B cell (primary cell): ENCODE measurements at regions of chr11 and their contacts with region 1.

Region 1: DNA sequence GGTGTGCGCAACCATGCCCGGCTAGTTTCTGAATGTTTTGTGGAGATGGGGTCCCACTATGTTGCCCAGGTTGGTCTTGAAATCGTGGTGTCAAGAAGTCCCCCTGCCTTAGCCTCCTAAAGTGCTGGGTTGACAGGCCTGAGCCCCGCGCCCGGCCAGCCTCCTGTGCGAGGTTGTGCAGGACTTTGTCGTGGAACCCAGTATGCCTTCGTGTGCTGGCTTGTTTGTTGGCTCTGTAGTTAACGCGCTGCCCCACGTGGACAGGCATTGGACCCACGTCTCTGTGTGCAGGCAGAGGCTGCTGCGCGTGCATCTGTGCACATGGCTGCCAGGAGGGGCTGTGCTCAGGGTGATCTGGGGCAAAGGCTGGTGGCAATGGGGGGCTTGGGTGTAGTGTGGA is 33.9 kb upstream of the ZNF195 start:
- DNase-seq: no peak
- ATAC-seq: no peak
- H3K4me3 ChIP-seq: no peak overlapping the region
- H3K4me3 Mint-ChIP-seq: no peak overlapping the region
- H3K27ac ChIP-seq: no peak overlapping the region
- H3K27ac Mint-ChIP-seq: no peak overlapping the region
- H3K4me1 ChIP-seq: no peaks in the 10 kb centered on the region
- H3K4me1 Mint-ChIP-seq: peaks cover 5% of the 10 kb centered on the region
- H3K27me3 ChIP-seq: no peaks in the 10 kb centered on the region
- H3K27me3 Mint-ChIP-seq: no peaks in the 10 kb centered on the region
- CTCF ChIP-seq: no peak

Region 2: DNA sequence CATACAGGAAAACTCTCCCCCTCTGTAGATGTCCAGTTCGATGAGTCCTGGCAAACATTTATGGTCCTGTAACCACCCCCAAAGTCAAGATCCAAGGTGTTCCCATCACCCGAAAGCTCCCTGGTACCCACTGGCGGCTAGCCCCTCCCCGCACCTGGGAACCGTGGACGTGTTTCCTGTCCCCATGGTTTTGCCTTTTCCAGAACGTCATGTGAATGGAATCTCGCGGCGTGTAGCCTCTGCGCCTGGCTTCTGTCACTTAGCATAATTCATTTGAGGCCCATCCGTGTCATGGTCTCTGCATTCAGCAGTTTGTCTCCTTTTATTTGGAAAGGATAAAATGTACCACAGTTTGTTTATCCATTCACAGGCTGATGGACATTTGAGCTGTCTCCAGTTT is 861.7 kb before region 1 on chr11:
- CTCF ChIA-PET with region 1: no interaction called
- POLR2A ChIA-PET with region 1: no interaction called
- intact Hi-C with region 1: no loop called
- DNase-seq: no peak
- ATAC-seq: no peak
- H3K4me3 ChIP-seq: no peak overlapping the region
- H3K4me3 Mint-ChIP-seq: no peak overlapping the region
- H3K27ac ChIP-seq: no peak overlapping the region
- H3K27ac Mint-ChIP-seq: no peak overlapping the region
- H3K4me1 ChIP-seq: no peaks in the 10 kb centered on the region
- H3K4me1 Mint-ChIP-seq: peaks cover 13% of the 10 kb centered on the region
- H3K27me3 ChIP-seq: no peaks in the 10 kb centered on the region
- H3K27me3 Mint-ChIP-seq: no peaks in the 10 kb centered on the region
- CTCF ChIP-seq: no peak

Region 3: DNA sequence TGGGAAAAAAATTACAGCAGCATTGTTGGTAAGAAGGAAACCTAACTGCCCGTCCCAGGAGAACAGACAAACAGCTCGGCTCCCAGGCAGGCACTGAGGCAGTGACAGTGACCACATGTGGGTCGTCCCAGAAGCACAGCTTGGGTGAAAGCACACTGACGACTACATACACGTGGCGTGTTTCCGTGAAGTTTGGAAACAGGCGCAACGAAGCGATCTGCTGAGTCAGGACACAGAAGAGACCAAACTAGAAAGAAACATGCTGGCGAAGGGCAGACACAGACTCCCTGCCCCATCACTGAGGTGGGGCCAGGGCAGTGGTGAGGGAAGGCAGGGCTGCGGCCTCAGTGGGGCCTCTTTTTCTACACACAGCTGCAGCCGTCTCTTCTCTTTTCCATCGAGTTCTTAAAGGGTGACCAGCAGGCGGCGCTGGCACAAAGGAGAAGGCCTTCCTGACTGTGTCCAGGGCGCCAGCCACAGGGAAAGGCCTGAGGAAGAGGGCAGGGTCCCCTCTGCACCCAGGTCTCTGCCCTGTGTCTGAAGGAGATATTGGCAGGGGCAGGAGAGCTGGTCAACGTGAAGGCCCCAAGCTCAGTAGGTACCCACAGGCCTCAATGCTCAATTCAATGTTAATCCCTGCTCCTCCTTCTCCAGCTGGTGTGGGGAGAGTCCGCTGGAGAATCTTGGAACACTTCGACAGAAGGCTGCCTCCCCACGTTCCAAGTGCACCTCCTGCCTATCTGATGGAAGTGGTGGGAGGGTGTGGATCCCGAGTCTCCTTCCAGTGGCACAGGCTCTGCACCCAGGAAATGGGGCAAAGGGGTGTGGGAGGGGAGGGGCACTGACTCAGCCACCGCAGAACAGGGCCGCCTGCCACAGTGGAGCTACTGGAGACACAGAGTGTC is 375.5 kb before region 1 on chr11:
- CTCF ChIA-PET with region 1: no interaction called
- POLR2A ChIA-PET with region 1: no interaction called
- intact Hi-C with region 1: loop called (anchors 5 kb)
- DNase-seq: peak; percentile 51
- ATAC-seq: peak; percentile 34
- H3K4me3 ChIP-seq: no peak overlapping the region
- H3K4me3 Mint-ChIP-seq: peak overlapping the region; percentile 9
- H3K27ac ChIP-seq: peak overlapping the region in 1 of 2 donors; percentile 42
- H3K27ac Mint-ChIP-seq: peak overlapping the region; percentile 39
- H3K4me1 ChIP-seq: peaks cover 24 to 30% of the 10 kb centered on the region in 2 donors
- H3K4me1 Mint-ChIP-seq: peaks cover 26% of the 10 kb centered on the region
- H3K27me3 ChIP-seq: no peaks in the 10 kb centered on the region
- H3K27me3 Mint-ChIP-seq: no peaks in the 10 kb centered on the region
- CTCF ChIP-seq: peak; percentile 50

Region 4: DNA sequence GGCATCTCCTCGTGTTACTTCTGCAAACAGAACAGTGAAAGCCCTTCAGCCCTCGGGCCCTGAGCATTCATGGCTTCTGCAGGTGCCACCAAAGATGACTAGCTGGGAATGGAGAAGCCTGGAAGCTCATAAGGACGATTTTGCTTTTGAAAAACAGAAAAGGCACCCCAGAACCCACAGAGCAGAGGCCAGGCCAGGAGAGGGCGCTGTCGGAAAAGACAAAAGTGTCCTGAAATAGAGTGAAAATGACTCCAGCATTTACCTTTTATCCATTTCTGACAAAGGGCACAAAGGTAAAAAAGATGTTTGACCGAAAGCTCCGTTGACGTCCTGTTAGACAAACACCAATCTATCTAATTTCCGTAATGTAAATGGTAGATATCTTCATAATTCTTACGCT is 71.5 kb before region 1 on chr11:
- CTCF ChIA-PET with region 1: interaction called, 11 read pairs
- POLR2A ChIA-PET with region 1: no interaction called
- intact Hi-C with region 1: no loop called
- DNase-seq: peak; percentile 52
- ATAC-seq: no peak
- H3K4me3 ChIP-seq: no peak overlapping the region
- H3K4me3 Mint-ChIP-seq: no peak overlapping the region
- H3K27ac ChIP-seq: no peak overlapping the region
- H3K27ac Mint-ChIP-seq: no peak overlapping the region
- H3K4me1 ChIP-seq: no peaks in the 10 kb centered on the region
- H3K4me1 Mint-ChIP-seq: no peaks in the 10 kb centered on the region
- H3K27me3 ChIP-seq: peaks cover 0 to 26% (median 7%) of the 10 kb centered on the region in 4 experiments
- H3K27me3 Mint-ChIP-seq: peaks cover 47% of the 10 kb centered on the region
- CTCF ChIP-seq: peak; percentile 58

Region 5: DNA sequence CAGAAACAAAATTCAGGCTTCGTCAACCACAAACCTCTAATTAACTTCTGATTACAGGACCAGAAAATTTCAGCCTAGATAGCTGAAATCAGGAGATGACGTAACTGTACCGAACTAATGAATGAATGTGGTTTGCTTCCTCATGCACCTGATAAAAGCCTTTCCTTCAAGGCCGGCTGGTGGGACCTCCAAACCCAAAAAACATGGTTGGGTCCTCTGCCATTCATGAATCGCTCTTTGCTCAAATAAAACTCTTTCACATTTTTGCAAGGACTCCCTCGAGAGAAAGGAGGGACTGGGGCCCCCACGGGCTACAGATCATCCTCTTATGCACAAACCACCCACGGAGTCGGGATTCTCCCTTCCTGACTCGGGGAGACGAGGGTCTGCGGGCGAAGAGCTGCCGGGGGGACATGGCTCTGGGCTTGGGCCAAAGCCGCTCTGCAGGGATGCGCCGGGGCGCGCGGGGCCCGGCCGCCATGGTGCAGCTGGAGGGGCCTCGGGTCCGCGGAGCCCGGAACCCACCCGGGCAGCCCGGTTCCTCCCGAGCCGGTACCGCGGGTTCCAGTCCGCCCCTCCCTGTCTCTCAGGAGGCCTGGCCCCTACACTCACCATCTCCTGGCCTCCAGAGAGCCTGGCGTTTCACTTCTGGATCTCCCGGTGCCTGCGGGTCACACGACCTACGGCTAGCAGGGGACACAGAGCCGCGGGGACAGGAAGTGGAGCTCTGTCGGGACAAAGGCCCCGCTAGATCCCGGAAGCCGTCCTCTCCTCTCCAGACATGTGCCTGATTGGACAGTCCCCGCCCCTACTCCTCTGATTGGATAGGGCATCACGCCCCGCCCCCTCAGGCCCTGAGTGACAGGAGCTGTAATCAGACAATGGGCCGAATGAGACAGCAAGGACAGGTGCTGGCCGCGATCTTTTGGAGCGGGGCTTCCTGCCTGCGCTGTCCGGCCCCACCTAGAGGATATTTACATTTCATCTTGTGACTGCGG is 34.1 kb before region 1 on chr11 and contains the start of gene ZNF195:
- CTCF ChIA-PET with region 1: interaction called, 13 read pairs
- POLR2A ChIA-PET with region 1: no interaction called
- intact Hi-C with region 1: no loop called
- DNase-seq: peak; percentile 95
- ATAC-seq: peak; percentile 100
- H3K4me3 ChIP-seq: peak within 1 kb of the TSS; percentile 67 to 97 (median 87)
- H3K4me3 Mint-ChIP-seq: peak within 1 kb of the TSS; percentile 97
- H3K27ac ChIP-seq: peak within 1 kb of the TSS; percentile 63 to 92
- H3K27ac Mint-ChIP-seq: peak within 1 kb of the TSS; percentile 95
- H3K4me1 ChIP-seq: peaks cover 16 to 24% of the 10 kb centered on the region in 2 donors
- H3K4me1 Mint-ChIP-seq: peaks cover 39% of the 10 kb centered on the region
- H3K27me3 ChIP-seq: no peaks in the 10 kb centered on the region
- H3K27me3 Mint-ChIP-seq: no peaks in the 10 kb centered on the region
- CTCF ChIP-seq: no peak
- total RNA-seq, gene ZNF195: 46.0 and 47.3 TPM in 2 replicates

Region 6: DNA sequence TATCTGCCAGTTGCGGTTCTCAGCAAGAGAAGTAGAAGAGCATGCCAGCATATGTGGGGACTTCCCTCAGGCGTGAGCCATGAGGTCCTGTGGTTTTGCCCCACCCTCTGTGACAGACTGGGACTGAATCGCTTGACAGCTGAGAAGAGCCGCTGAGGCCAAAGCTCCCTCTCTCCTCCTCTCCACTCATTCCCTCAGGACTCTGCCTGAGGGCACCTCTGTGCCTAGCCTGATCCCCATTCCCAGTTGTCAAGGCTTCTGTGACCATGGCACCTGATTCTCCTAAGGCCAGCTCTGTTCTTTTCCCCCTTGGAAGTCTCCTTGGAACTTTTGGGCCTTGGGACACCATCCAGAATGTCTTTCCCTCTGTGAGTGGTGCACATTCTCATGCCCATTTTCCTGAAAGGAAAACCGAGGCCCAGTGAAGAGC is 201.9 kb after region 1 on chr11:
- CTCF ChIA-PET with region 1: no interaction called
- POLR2A ChIA-PET with region 1: no interaction called
- intact Hi-C with region 1: no loop called
- DNase-seq: peak; percentile 59
- ATAC-seq: peak; percentile 89
- H3K4me3 ChIP-seq: peak overlapping the region in 1 of 5 experiments; percentile 3
- H3K4me3 Mint-ChIP-seq: peak overlapping the region; percentile 65
- H3K27ac ChIP-seq: no peak overlapping the region
- H3K27ac Mint-ChIP-seq: no peak overlapping the region
- H3K4me1 ChIP-seq: peaks cover 13 to 14% of the 10 kb centered on the region in 2 donors
- H3K4me1 Mint-ChIP-seq: peaks cover 13% of the 10 kb centered on the region
- H3K27me3 ChIP-seq: no peaks in the 10 kb centered on the region
- H3K27me3 Mint-ChIP-seq: no peaks in the 10 kb centered on the region
- CTCF ChIP-seq: no peak

Region 7: DNA sequence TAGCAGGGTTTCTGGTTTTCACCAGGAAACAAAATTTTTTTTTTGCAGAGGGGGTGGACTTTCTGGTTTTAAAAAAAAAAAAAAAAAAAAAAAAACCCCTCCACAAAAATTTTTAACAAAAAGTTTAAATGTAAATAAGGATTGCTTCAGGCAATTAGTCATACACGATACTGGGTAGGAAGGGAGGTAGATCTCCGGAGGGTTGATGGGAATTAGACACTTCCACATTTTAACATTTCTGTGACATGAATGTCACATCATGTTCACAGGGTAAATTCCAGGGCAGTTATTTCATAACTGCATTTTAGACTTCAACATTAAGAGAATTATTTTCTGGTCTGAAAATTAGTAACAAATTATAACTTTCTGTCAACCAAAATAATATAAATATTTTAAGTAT is 368.6 kb after region 1 on chr11:
- CTCF ChIA-PET with region 1: no interaction called
- POLR2A ChIA-PET with region 1: no interaction called
- intact Hi-C with region 1: no loop called
- DNase-seq: no peak
- ATAC-seq: no peak
- H3K4me3 ChIP-seq: no peak overlapping the region
- H3K4me3 Mint-ChIP-seq: no peak overlapping the region
- H3K27ac ChIP-seq: peak overlapping the region in 1 of 2 donors; percentile 50
- H3K27ac Mint-ChIP-seq: peak overlapping the region; percentile 32
- H3K4me1 ChIP-seq: peaks cover 16 to 18% of the 10 kb centered on the region in 2 donors
- H3K4me1 Mint-ChIP-seq: peaks cover 36% of the 10 kb centered on the region
- H3K27me3 ChIP-seq: no peaks in the 10 kb centered on the region
- H3K27me3 Mint-ChIP-seq: no peaks in the 10 kb centered on the region
- CTCF ChIP-seq: no peak